ENCODE measurements at regions of chr2 and their contacts with region 1.

Region 1: GRCh38 chr2:168118733-168119514 is 128.5 kb downstream of the STK39 start:
- DNase-seq: peak; percentile 71
- ATAC-seq: peak; percentile 79
- H3K4me3 ChIP-seq: no peak overlapping the region
- H3K27ac ChIP-seq: no peak overlapping the region
- H3K4me1 ChIP-seq: no peaks in the 10 kb centered on the region
- H3K27me3 ChIP-seq: no peaks in the 10 kb centered on the region
- CTCF ChIP-seq: peak; percentile 71
- EP300 ChIP-seq: no peak
- POLR2A ChIP-seq: no peak
- RAD21 ChIP-seq: peak; percentile 59

Region 2: GRCh38 chr2:166539340-166540162 is 1579.4 kb before region 1 on chr2:
- CTCF ChIA-PET with region 1: interaction called, 12 read pairs
- POLR2A ChIA-PET with region 1: no interaction called
- in situ Hi-C with region 1: loop called (anchors 5 kb)
- intact Hi-C with region 1: loop called (anchors 1 kb)
- DNase-seq: peak; percentile 64
- ATAC-seq: peak; percentile 98
- H3K4me3 ChIP-seq: no peak overlapping the region
- H3K27ac ChIP-seq: no peak overlapping the region
- H3K4me1 ChIP-seq: no peaks in the 10 kb centered on the region
- H3K27me3 ChIP-seq: no peaks in the 10 kb centered on the region
- CTCF ChIP-seq: peak; percentile 92
- EP300 ChIP-seq: no peak
- POLR2A ChIP-seq: no peak
- RAD21 ChIP-seq: peak; percentile 83

Region 3: GRCh38 chr2:167127135-167127534 is 991.8 kb before region 1 on chr2:
- CTCF ChIA-PET with region 1: no interaction called
- POLR2A ChIA-PET with region 1: no interaction called
- in situ Hi-C with region 1: loop called (anchors 25 kb)
- intact Hi-C with region 1: no loop called
- DNase-seq: peak; percentile 33
- ATAC-seq: peak; percentile 76
- H3K4me3 ChIP-seq: no peak overlapping the region
- H3K27ac ChIP-seq: no peak overlapping the region
- H3K4me1 ChIP-seq: no peaks in the 10 kb centered on the region
- H3K27me3 ChIP-seq: no peaks in the 10 kb centered on the region
- CTCF ChIP-seq: peak; percentile 36
- EP300 ChIP-seq: no peak
- POLR2A ChIP-seq: no peak
- RAD21 ChIP-seq: no peak

Region 4: DNA sequence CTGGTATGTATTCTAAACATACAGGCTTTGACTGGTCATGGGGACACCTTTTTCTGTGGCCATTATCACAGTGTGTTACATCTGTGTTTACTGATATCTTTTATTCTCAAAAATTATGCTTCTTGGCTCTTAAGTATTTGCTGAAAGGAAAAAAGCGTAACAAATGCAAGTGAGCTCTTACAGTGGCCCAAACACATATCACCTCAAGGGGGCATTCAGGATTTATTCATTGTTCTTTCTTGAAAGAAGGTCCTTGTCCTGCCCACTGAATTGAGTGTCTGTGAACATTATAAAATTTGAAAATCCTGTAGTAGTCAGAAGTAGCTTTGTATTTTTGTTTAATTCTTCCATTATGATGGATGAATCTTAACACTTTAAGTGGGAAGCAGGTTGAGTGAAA is 776.2 kb before region 1 on chr2:
- CTCF ChIA-PET with region 1: no interaction called
- POLR2A ChIA-PET with region 1: no interaction called
- in situ Hi-C with region 1: no loop called
- intact Hi-C with region 1: loop called (anchors 5 kb)
- DNase-seq: peak; percentile 14
- ATAC-seq: peak; percentile 47; the same call in 1 of the 3 replicates
- H3K4me3 ChIP-seq: no peak overlapping the region
- H3K27ac ChIP-seq: no peak overlapping the region
- H3K4me1 ChIP-seq: no peaks in the 10 kb centered on the region
- H3K27me3 ChIP-seq: no peaks in the 10 kb centered on the region
- CTCF ChIP-seq: peak; percentile 36
- EP300 ChIP-seq: no peak
- POLR2A ChIP-seq: no peak
- RAD21 ChIP-seq: no peak

Region 5: DNA sequence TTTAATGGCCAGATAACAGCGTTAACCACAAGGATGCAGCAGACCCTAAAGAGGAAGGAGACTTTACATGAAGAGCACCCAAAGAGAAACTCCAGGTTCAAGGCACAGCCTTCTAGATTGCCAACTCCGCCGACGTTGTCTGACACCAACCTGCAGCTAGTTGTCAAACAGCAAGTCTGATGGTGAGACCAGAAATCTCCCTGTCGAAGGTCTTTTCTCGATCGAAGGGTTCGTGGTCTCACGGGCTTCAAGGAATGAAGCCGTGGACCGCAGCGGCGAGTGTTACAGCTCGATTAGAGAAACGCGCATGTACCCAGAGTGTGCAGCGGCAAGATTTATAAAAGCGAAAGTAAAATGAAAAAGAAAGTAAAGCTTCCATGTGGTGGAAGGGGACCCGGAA is 574.3 kb before region 1 on chr2:
- CTCF ChIA-PET with region 1: no interaction called
- POLR2A ChIA-PET with region 1: no interaction called
- in situ Hi-C with region 1: loop called (anchors 25 kb)
- intact Hi-C with region 1: no loop called
- DNase-seq: no peak
- ATAC-seq: no peak
- H3K4me3 ChIP-seq: no peak overlapping the region
- H3K27ac ChIP-seq: no peak overlapping the region
- H3K4me1 ChIP-seq: peaks cover 10% of the 10 kb centered on the region
- H3K27me3 ChIP-seq: no peaks in the 10 kb centered on the region
- CTCF ChIP-seq: no peak
- EP300 ChIP-seq: no peak
- POLR2A ChIP-seq: no peak
- RAD21 ChIP-seq: no peak

Region 6: GRCh38 chr2:167964650-167965413 is 154.1 kb before region 1 on chr2:
- CTCF ChIA-PET with region 1: interaction called, 4 read pairs
- POLR2A ChIA-PET with region 1: no interaction called
- in situ Hi-C with region 1: no loop called
- intact Hi-C with region 1: loop called (anchors 1 kb)
- DNase-seq: peak; percentile 10
- ATAC-seq: peak; percentile 36; the same call in 1 of the 3 replicates
- H3K4me3 ChIP-seq: no peak overlapping the region
- H3K27ac ChIP-seq: no peak overlapping the region
- H3K4me1 ChIP-seq: no peaks in the 10 kb centered on the region
- H3K27me3 ChIP-seq: no peaks in the 10 kb centered on the region
- CTCF ChIP-seq: no peak
- EP300 ChIP-seq: no peak
- POLR2A ChIP-seq: no peak
- RAD21 ChIP-seq: no peak

Region 7: DNA sequence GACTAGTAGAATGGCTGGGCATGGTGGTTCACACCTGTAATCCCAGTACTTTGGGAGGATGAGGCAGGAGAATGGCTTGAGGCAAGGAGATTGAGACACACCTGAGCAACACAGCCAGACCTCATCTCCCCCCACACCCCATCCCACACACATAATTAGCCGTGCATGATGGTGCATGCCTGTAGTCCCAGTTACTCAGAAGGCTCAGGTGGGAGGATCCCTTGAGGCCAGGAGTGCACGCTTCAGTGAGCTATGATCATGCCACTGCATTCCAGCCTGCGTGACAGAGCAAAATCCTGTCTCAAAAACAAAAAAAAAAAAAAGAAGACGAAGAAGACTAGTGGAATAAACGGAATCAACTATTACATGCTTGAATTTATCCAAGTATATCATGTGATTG is 21.5 kb before region 1 on chr2:
- CTCF ChIA-PET with region 1: no interaction called
- POLR2A ChIA-PET with region 1: no interaction called
- in situ Hi-C with region 1: no loop called
- intact Hi-C with region 1: no loop called
- DNase-seq: no peak
- ATAC-seq: no peak
- H3K4me3 ChIP-seq: no peak overlapping the region
- H3K27ac ChIP-seq: no peak overlapping the region
- H3K4me1 ChIP-seq: no peaks in the 10 kb centered on the region
- H3K27me3 ChIP-seq: no peaks in the 10 kb centered on the region
- CTCF ChIP-seq: no peak
- EP300 ChIP-seq: no peak
- POLR2A ChIP-seq: no peak
- RAD21 ChIP-seq: no peak

Region 8: DNA sequence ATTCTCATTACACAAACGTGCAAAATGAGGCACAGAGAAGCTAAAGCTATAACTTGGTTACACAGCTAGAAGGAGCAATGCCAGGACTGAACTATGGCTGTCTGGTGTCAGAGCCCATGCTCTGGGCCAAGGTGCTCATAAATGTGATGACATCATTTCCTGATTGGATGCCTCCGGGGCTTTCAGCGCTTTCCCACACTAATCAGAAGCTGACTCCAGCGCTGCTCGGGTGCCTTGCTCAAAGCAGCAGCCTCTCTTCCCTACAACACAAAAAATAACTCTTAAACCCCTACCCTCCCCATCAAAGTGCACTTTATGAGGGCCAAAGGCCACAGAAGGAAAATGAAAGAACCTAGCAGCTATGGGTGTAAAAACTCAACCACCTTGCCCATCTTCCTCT is 37.7 kb after region 1 on chr2:
- CTCF ChIA-PET with region 1: no interaction called
- POLR2A ChIA-PET with region 1: no interaction called
- in situ Hi-C with region 1: no loop called
- intact Hi-C with region 1: no loop called
- DNase-seq: no peak
- ATAC-seq: no peak; the same call in 2 of the 3 replicates
- H3K4me3 ChIP-seq: no peak overlapping the region
- H3K27ac ChIP-seq: no peak overlapping the region
- H3K4me1 ChIP-seq: peaks cover 44% of the 10 kb centered on the region
- H3K27me3 ChIP-seq: no peaks in the 10 kb centered on the region
- CTCF ChIP-seq: no peak
- EP300 ChIP-seq: no peak
- POLR2A ChIP-seq: no peak
- RAD21 ChIP-seq: no peak